A549 (cell line): ENCODE measurements at regions of chr5 and their contacts with region 1.

Region 1: DNA sequence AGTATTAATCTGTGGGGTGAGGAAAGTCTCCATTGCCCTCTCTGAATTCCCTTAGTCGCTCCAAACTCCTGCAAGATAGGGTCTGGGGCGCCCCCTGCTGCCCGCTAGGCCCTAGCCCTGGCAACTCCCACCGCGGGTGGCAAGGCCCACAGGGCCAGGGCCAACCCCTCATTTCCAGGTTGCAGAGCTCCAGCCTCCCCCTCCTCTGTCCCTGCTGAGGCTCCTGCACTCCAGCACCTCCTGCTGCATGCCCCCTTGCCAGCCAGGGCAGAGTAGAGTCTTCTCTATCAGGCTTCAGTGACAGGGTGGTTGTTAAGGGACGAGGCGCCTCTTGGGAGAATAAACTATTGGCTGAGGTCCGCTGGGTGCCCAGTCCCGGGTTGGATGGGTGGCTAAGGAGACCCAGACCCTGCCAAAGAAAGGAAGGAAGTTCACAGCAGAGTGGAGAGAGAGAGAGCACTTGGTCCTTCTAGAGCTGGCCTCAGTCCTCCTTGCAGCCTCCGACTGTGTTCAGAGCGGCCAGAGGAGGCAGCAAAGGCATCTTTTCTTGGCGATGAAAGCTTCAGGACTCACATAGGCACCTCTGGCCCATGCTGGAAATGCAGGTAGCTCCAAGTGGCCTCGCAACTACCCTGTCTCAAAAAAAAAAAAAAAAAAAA is 45.6 kb downstream of the SAR1B start:
- DNase-seq: peak; percentile 89 to 93
- ATAC-seq: peak; percentile 94
- H3K4me3 ChIP-seq: no peak overlapping the region
- H3K27ac ChIP-seq: peak overlapping the region; percentile 62 to 73
- H3K4me1 ChIP-seq: peaks cover 12% of the 10 kb centered on the region
- CTCF ChIP-seq: peak; percentile 94
- EP300 ChIP-seq: no peak
- POLR2A ChIP-seq: no peak
- RAD21 ChIP-seq: peak; percentile 90 to 95

Region 2: DNA sequence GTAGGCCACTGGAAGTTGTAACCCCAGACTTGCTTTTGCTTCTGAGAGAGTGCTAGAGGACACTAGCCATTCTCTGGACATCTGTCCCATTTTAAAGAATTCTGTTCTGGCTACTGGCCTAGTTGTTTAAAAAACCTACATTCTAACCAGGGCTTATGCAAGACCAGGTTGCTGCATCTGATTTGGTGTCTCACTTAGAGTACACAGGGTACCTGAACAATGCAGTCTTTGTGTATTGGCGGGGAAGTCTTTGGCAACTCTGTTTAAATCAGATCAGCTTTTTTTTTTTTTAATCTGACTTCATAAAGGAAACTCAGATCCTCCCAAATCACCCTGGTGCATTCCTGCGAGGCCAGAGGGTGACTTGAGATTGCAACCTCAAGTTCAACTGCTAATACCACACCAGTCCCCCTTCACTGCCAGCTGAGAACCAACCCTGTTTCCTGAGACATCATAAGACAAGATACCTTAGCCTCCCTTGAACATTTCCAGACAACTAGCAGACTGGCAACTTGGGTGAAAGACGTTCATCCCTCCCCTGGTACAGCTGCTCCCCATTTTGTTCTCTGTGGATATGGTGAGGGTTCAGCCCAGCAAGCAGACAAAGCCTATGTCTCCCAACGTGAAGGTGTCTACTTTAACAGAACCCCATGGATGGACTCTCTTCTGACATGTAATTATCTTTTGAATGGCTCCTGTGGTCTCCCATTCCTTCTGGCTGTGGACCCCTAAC is 437.3 kb before region 1 on chr5:
- CTCF ChIA-PET with region 1: no interaction called
- POLR2A ChIA-PET with region 1: no interaction called
- DNase-seq: no peak
- ATAC-seq: no peak
- H3K4me3 ChIP-seq: no peak overlapping the region
- H3K27ac ChIP-seq: no peak overlapping the region
- H3K4me1 ChIP-seq: peaks cover 6% of the 10 kb centered on the region; the same call in 2 of the 3 replicates
- CTCF ChIP-seq: no peak
- EP300 ChIP-seq: no peak
- POLR2A ChIP-seq: no peak
- RAD21 ChIP-seq: no peak

Region 3: GRCh38 chr5:134304311-134304710 is 282.7 kb before region 1 on chr5:
- CTCF ChIA-PET with region 1: interaction called, 48 read pairs
- POLR2A ChIA-PET with region 1: no interaction called
- DNase-seq: no peak
- ATAC-seq: no peak
- H3K4me3 ChIP-seq: no peak overlapping the region
- H3K27ac ChIP-seq: no peak overlapping the region
- H3K4me1 ChIP-seq: no peaks in the 10 kb centered on the region
- CTCF ChIP-seq: no peak
- EP300 ChIP-seq: no peak
- POLR2A ChIP-seq: no peak
- RAD21 ChIP-seq: no peak

Region 4: GRCh38 chr5:134561871-134562296 is 25.1 kb before region 1 on chr5:
- CTCF ChIA-PET with region 1: interaction called, 56 read pairs
- POLR2A ChIA-PET with region 1: no interaction called
- DNase-seq: peak; percentile 48 to 53
- ATAC-seq: peak; percentile 62 to 81; a peak in 5 of 6 replicates
- H3K4me3 ChIP-seq: no peak overlapping the region
- H3K27ac ChIP-seq: peak overlapping the region; percentile 29 to 75; a peak in 3 of 6 replicates
- H3K4me1 ChIP-seq: peaks cover 14% of the 10 kb centered on the region
- CTCF ChIP-seq: peak; percentile 37; the same call in 2 of the 3 replicates
- EP300 ChIP-seq: no peak
- POLR2A ChIP-seq: no peak
- RAD21 ChIP-seq: peak; percentile 20 to 41; a peak in 3 of 5 replicates

Region 5: GRCh38 chr5:134600600-134600999 is 13.6 kb after region 1 on chr5:
- CTCF ChIA-PET with region 1: interaction called, 31 read pairs
- POLR2A ChIA-PET with region 1: interaction called, 3 read pairs
- DNase-seq: no peak
- ATAC-seq: no peak
- H3K4me3 ChIP-seq: no peak overlapping the region
- H3K27ac ChIP-seq: no peak overlapping the region
- H3K4me1 ChIP-seq: 0 out of 3 replicates have a peak, but pooled peaks cover 3% of the 10 kb centered on the region
- CTCF ChIP-seq: no peak
- EP300 ChIP-seq: no peak
- POLR2A ChIP-seq: no peak
- RAD21 ChIP-seq: no peak